ENCODE measurements at regions of chr20 and their contacts with region 1.

Region 1: DNA sequence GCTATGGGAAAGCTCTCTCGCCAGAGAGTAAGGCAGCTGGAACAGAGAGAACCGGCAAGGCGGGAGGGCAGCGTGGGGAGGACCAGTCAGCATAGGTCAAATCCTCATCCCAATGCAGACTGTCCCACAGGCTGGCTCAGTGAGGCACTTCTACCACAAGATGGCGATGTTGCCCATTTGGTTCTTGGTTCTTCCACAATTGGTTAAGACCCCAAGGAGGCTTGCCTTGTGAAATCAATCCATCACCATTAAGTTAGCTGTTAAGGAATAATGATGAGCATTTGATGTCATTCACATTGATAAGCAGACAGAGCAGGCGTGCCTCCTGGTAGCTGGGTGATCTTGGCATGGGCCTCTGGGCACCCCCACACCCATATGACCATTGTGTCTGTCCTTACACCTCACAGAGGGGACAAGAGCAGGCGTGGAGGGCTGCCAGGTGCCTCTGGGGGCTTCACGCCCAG is 2.4 kb downstream of the CSTL1 start:
- DNase-seq: peak; percentile 45
- H3K4me3 ChIP-seq: no peak overlapping the region
- H3K27ac ChIP-seq: no peak overlapping the region
- H3K27me3 ChIP-seq: peaks cover 3% of the 10 kb centered on the region
- CTCF ChIP-seq: peak; percentile 88

Region 2: DNA sequence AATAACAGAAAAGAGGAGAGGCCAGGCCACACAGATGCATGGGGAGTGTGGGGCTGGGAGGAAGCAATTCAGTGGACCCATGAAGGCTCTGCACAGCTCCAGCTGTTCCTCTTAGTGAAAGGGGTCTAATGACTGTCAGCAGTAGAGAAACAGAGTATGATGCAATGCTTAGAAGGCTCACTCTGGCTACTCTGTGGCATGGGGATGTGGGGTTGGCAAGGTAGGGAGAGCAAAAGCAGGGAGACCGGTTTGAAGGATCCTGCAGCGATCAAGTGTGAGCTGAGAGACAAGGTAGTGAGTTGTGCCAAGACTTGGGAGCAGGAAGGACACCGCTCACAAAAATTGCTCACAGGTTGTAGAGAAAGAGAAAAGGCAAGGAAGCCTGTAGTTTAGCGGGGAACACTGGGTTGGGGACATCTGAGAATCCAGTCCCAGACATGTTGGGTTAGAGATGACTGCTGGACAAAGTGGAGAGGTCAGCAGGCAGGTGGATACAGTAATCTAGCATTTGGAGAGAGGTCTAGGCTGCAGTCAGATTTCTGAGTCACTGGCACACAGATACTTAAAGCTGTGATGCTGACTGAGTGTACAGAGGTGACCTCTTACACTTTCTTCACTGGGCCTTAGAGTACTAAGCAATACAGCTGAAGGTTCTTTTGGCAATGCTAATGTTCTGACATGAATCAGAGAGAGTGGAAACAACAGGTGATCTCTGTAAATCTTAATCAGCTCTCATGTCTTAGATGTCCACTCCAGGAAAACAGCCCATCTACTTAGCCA is 47.7 kb before region 1 on chr20:
- CTCF ChIA-PET with region 1: no interaction called
- POLR2A ChIA-PET with region 1: no interaction called
- DNase-seq: no peak
- H3K4me3 ChIP-seq: no peak overlapping the region
- H3K27ac ChIP-seq: no peak overlapping the region
- H3K27me3 ChIP-seq: no peaks in the 10 kb centered on the region
- CTCF ChIP-seq: no peak

Region 3: GRCh38 chr20:23420943-23421931 is 20.6 kb before region 1 on chr20 and contains the start of gene NAPB:
- CTCF ChIA-PET with region 1: interaction called, 27 read pairs
- POLR2A ChIA-PET with region 1: no interaction called
- DNase-seq: peak; percentile 69
- H3K4me3 ChIP-seq: peak within 1 kb of the TSS; percentile 92
- H3K27ac ChIP-seq: peak within 1 kb of the TSS; percentile 80
- H3K27me3 ChIP-seq: peaks cover 2% of the 10 kb centered on the region
- CTCF ChIP-seq: peak; percentile 49
- polyA plus RNA-seq, gene NAPB: 4.8 and 6.4 TPM in 2 replicates